Endothelial cell of umbilical vein (primary cell): ENCODE measurements at regions of chr4 and their contacts with region 1.

Region 1: GRCh38 chr4:43132010-43132582 is 239.6 kb downstream of the GRXCR1 start:
- DNase-seq: peak; percentile 33
- H3K4me3 ChIP-seq: no peak overlapping the region
- H3K27ac ChIP-seq: no peak overlapping the region
- H3K4me1 ChIP-seq: no peaks in the 10 kb centered on the region
- H3K27me3 ChIP-seq: no peaks in the 10 kb centered on the region
- CTCF ChIP-seq: peak; percentile 63 to 65
- POLR2A ChIP-seq: no peak

Region 2: GRCh38 chr4:42816189-42816879 is 315.8 kb before region 1 on chr4:
- CTCF ChIA-PET with region 1: no interaction called
- POLR2A ChIA-PET with region 1: no interaction called
- dilution Hi-C with region 1: no loop called
- intact Hi-C with region 1: no loop called
- DNase-seq: no peak
- H3K4me3 ChIP-seq: no peak overlapping the region
- H3K27ac ChIP-seq: no peak overlapping the region
- H3K4me1 ChIP-seq: no peaks in the 10 kb centered on the region
- H3K27me3 ChIP-seq: no peaks in the 10 kb centered on the region
- CTCF ChIP-seq: no peak
- POLR2A ChIP-seq: no peak

Region 3: DNA sequence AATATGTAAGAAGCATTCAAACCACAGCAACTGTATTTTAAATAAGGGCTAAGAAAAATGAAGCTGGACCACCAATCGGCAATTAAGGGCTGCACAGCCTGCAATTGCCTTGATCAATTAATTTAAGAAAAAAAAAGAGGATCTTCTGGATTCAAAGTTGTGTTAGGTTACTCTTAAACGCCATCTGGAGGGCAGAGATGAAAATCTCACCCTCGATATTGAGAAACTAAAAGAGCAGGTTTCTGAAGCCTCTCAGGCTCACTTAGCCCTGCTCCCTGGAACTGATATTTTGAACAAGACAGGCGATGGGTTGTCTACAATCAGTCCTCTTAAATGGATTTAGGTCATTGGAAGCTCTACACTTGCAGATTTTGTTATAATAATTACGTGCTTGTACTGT is 339.9 kb after region 1 on chr4:
- CTCF ChIA-PET with region 1: interaction called, 17 read pairs
- POLR2A ChIA-PET with region 1: no interaction called
- dilution Hi-C with region 1: no loop called
- intact Hi-C with region 1: loop called (anchors 1 kb)
- DNase-seq: no peak
- H3K4me3 ChIP-seq: no peak overlapping the region
- H3K27ac ChIP-seq: no peak overlapping the region
- H3K4me1 ChIP-seq: no peaks in the 10 kb centered on the region
- H3K27me3 ChIP-seq: no peaks in the 10 kb centered on the region
- CTCF ChIP-seq: no peak
- POLR2A ChIP-seq: no peak

Region 4: GRCh38 chr4:43776371-43776770 is 644.3 kb after region 1 on chr4:
- CTCF ChIA-PET with region 1: interaction called, 5 read pairs
- POLR2A ChIA-PET with region 1: no interaction called
- dilution Hi-C with region 1: no loop called
- intact Hi-C with region 1: loop called (anchors 5 kb)
- DNase-seq: peak; percentile 24
- H3K4me3 ChIP-seq: no peak overlapping the region
- H3K27ac ChIP-seq: no peak overlapping the region
- H3K4me1 ChIP-seq: no peaks in the 10 kb centered on the region
- H3K27me3 ChIP-seq: no peaks in the 10 kb centered on the region
- CTCF ChIP-seq: no peak
- POLR2A ChIP-seq: no peak

Region 5: GRCh38 chr4:44425614-44426208 is 1293.6 kb after region 1 on chr4:
- CTCF ChIA-PET with region 1: interaction called, 43 read pairs
- POLR2A ChIA-PET with region 1: no interaction called
- dilution Hi-C with region 1: no loop called
- intact Hi-C with region 1: loop called (anchors 1 kb)
- DNase-seq: peak; percentile 35
- H3K4me3 ChIP-seq: no peak overlapping the region
- H3K27ac ChIP-seq: no peak overlapping the region
- H3K4me1 ChIP-seq: no peaks in the 10 kb centered on the region
- H3K27me3 ChIP-seq: no peaks in the 10 kb centered on the region
- CTCF ChIP-seq: peak; percentile 47 to 54
- POLR2A ChIP-seq: no peak

Region 6: DNA sequence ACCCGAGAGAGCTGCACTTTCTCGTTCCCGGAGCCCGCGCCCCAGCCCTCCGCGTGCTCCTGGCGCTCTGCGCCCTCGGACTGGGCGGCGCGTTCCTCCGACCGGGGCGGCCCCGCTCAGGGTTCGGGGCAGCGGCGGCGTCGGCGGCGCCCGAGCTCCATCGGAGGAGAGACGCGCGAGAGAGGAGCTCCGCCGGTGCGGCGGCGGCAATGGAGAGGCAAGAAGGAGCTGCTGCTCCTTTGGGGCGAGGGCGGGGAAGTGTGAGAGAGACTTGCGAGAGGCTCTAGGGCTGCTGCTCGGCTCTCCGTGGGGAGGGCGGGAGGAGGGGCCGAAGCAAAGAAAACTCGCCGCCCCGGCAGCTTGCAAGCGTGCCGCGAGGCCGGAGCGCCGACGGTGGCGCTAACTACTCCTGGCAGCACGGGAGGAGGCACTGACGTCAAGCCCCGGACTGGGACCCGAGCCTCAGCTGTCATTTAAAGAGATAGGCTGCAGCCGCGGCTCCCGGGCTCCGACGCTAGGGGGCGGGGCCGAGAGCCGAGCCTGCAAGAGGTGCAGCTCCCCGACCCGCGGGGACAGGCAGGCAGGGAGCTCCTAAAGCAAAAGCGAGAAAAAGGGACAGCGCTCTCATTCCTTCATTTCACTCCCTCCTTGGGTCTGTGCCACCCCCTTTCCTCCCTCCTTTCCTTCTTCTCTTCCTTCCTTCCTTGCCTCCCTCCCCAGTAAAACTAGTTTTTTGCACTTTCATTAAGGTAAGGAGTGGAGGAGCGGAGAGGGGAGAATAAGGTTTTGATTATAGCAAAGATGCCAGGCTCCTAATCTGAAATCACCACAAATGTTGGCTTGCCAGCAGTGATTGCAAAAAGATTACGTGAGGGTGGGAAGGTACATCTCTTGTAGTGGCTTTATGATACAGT is 1316.7 kb after region 1 on chr4 and contains the start of gene KCTD8:
- CTCF ChIA-PET with region 1: interaction called, 10 read pairs
- POLR2A ChIA-PET with region 1: no interaction called
- dilution Hi-C with region 1: no loop called
- intact Hi-C with region 1: no loop called
- DNase-seq: peak; percentile 78
- H3K4me3 ChIP-seq: peak within 1 kb of the TSS in 2 of 3 experiments; percentile 30 to 36
- H3K27ac ChIP-seq: no peak within 1 kb of the TSS
- H3K4me1 ChIP-seq: peaks cover 10% of the 10 kb centered on the region
- H3K27me3 ChIP-seq: peaks cover 25 to 66% of the 10 kb centered on the region in 2 experiments
- CTCF ChIP-seq: peak; percentile 73 to 83
- POLR2A ChIP-seq: no peak
- total RNA-seq, gene KCTD8: 0.80 and 0.88 TPM in 2 replicates

Region 7: DNA sequence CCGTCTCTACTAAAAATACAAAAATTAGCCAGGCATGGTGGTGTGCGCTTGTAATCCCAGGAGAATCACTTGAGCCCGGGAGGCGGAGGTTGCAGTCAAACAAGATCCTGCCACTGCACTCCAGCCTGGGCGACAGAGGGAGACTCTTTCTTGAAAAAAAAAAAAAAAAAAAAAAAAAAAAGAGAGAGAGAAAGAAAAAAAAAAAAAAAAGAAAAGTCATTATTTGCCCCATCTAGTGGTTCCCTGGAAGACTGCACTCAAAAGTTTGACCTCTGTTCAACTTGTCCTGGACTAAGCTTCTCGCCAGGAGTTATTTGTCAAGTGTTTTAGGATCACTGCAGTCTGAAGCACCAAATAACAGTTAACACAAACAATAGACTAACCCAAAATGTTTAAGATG is 1361.8 kb after region 1 on chr4:
- CTCF ChIA-PET with region 1: interaction called, 28 read pairs
- POLR2A ChIA-PET with region 1: no interaction called
- dilution Hi-C with region 1: no loop called
- intact Hi-C with region 1: no loop called
- DNase-seq: peak; percentile 9
- H3K4me3 ChIP-seq: no peak overlapping the region
- H3K27ac ChIP-seq: no peak overlapping the region
- H3K4me1 ChIP-seq: no peaks in the 10 kb centered on the region
- H3K27me3 ChIP-seq: no peaks in the 10 kb centered on the region
- CTCF ChIP-seq: peak in 1 of 2 donors; percentile 23
- POLR2A ChIP-seq: no peak

Region 8: GRCh38 chr4:44629280-44629866 is 1497.3 kb after region 1 on chr4:
- CTCF ChIA-PET with region 1: interaction called, 66 read pairs
- POLR2A ChIA-PET with region 1: no interaction called
- dilution Hi-C with region 1: no loop called
- intact Hi-C with region 1: loop called (anchors 1 kb)
- DNase-seq: peak; percentile 55
- H3K4me3 ChIP-seq: no peak overlapping the region
- H3K27ac ChIP-seq: no peak overlapping the region
- H3K4me1 ChIP-seq: no peaks in the 10 kb centered on the region
- H3K27me3 ChIP-seq: no peaks in the 10 kb centered on the region
- CTCF ChIP-seq: peak; percentile 49 to 59
- POLR2A ChIP-seq: no peak